Activated CD8-positive, alpha-beta T cell treated with anti-CD3 and anti-CD28 coated beads, Interleukin-2, amount 10 ng/mL, durations not matched to agents 7 days and 5 days (primary cell): ENCODE measurements at regions of chr3 and their contacts with region 1.

Region 1: DNA sequence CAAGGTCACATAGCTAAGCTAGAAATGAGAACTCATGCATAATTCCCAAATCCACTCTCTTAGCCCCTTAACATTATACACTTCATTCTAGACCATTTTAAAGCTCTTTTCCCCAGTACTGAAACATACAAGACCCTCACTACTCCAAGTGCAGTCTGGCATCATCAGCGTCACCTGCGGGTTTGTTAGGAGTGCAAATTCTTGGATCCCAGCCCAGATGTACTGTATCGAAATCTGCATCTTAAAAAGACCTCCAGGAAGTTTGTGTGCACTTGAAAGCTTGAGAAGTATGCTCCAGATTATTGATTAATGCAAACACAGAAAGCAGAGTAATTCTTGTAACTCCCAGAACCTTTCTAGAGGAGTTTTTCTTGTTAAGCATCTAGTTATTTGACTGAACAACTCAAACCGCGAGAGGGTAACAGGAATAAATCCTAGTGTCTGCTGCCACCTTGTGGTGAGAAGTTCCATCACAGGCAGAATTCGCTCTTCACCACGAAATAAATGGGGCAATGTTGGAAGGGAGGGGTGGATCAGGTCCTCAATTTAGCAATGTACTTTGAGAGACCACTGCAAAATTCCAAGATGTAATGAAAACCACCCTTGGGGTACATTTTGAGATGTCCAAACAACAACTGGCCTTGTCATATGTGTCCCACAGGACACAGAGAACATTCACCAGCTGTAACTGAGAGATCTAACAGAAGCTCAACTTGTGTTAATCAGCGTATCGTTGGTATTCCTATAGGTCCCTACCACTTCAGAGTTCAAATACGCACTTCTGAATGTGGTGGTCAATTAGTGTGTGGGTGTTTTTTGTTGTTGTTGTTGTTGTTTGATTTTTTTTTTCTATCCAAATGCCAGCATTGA is 583 bp upstream of the C3orf49 start:
- DNase-seq: peak; percentile 74
- ATAC-seq: peak; percentile 63
- H3K4me3 Mint-ChIP-seq: no peak overlapping the region
- H3K27ac Mint-ChIP-seq: no peak overlapping the region
- H3K4me1 Mint-ChIP-seq: no peaks in the 10 kb centered on the region
- H3K27me3 Mint-ChIP-seq: no peaks in the 10 kb centered on the region

Region 2: DNA sequence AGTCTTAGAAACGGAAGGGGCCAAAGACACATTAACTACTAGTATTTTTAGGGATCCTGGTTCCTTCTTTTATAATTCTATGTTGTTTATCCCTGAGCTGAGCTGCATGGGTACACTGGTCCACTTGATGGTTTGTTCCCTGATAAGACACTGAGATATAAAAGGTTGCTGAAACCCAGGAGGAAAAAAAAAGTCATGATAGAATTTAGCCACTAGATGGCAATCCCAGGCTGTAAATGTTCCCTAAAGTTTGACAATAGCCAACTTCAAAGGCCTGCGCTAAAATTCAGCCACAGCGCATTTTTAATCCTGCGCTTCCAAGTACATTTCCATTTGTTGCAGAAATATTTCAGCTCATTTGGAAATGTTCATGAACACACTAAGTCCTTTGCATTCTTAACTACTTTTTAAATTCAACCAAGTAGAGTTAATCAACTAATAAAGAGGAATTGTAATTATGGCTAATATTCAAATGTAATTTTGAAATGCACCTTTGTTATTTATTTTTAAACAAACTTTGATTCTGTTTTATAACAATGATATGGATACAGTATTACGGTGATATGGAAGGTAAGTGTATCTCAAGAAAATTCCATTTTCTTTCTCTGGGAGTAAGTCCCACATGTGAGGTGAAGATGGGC is 1195.8 kb before region 1 on chr3:
- CTCF ChIA-PET with region 1: interaction called, 10 read pairs
- POLR2A ChIA-PET with region 1: no interaction called
- DNase-seq: no peak
- ATAC-seq: no peak
- H3K4me3 Mint-ChIP-seq: no peak overlapping the region
- H3K27ac Mint-ChIP-seq: no peak overlapping the region
- H3K4me1 Mint-ChIP-seq: no peaks in the 10 kb centered on the region
- H3K27me3 Mint-ChIP-seq: peaks cover 6% of the 10 kb centered on the region

Region 3: DNA sequence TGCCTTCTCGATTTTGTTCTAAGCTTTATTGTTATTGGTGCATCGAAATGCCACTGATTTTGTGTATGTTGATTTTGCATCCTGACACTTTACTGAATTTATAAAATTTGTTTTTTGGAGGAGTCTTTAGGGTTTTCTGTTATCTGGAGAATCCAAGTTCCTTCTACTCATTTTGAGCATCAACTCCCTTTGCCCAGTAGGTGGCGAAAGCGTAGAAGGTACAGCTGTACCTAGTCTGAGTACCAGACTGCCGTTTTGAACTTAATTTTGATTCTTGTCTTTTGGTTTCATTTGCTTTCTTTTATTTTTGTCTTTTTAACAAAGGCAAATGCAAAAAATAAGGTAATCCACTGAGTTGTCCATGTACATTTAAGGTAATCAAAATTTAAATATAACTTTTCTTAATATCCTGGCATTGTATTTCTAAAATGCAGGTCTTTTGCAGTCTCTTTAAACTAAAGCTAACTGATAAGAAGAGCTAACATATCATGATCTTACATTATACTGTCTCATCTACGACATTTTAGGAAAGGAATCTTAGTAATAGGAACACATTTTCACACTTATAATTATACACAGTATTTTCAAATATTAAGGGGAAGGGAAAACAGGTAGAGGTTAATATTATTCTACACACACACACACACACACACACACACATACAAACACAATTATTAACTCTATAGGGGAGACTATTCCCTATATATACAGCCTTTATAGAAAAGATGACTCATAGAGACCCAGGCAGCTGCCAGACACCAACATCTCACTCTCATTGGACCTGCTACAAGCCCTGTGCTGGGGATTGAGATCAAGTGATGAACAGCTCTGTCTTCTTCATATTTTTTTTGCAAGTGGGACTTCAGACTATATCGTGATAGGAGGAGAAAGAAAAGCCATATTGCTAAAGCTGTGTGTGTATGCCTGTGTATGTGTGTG is 468.7 kb before region 1 on chr3:
- CTCF ChIA-PET with region 1: interaction called, 74 read pairs
- POLR2A ChIA-PET with region 1: no interaction called
- DNase-seq: peak; percentile 55
- ATAC-seq: no peak
- H3K4me3 Mint-ChIP-seq: no peak overlapping the region
- H3K27ac Mint-ChIP-seq: no peak overlapping the region
- H3K4me1 Mint-ChIP-seq: no peaks in the 10 kb centered on the region
- H3K27me3 Mint-ChIP-seq: peaks cover 5% of the 10 kb centered on the region

Region 4: GRCh38 chr3:63927422-63928280 is 109.1 kb after region 1 on chr3:
- CTCF ChIA-PET with region 1: no interaction called
- POLR2A ChIA-PET with region 1: no interaction called
- DNase-seq: no peak
- ATAC-seq: no peak
- H3K4me3 Mint-ChIP-seq: no peak overlapping the region
- H3K27ac Mint-ChIP-seq: no peak overlapping the region
- H3K4me1 Mint-ChIP-seq: peaks cover 21% of the 10 kb centered on the region
- H3K27me3 Mint-ChIP-seq: no peaks in the 10 kb centered on the region